ENCODE measurements at regions of chr3 and their contacts with region 1.

Region 1: GRCh38 chr3:31925271-31925630 is 55.8 kb downstream of the OSBPL10 start:
- DNase-seq: no peak

Region 2: DNA sequence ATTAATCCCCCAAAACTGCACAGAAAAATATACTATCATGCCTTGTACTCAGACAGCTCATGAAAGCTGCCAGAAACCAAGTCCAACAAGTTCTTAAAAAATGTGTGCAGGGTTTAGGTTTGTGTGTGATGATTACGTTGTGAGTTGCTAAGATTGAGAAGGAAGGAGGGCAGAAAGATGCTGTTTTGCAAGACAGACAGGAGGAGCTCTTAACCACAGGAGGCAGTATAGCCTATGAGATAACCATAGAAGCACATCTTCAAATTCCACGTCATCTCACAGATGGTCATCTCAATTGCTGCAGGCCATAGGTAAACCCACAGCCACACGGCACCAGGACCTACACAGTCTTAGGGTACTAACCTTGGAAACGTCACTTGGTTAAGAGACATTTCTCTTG is 200.6 kb before region 1 on chr3:
- intact Hi-C with region 1: no loop called
- DNase-seq: no peak

Region 3: GRCh38 chr3:31968927-31969418 is 43.7 kb after region 1 on chr3:
- intact Hi-C with region 1: loop called in 1 of 2 experiments (anchors 5 kb)
- DNase-seq: no peak